Caco-2 (cell line): ENCODE measurements at regions of chr22 and their contacts with region 1.

Region 1: GRCh38 chr22:46934746-46935491 is 172.5 kb downstream of the TBC1D22A start:
- DNase-seq: peak; percentile 69 to 81
- H3K4me3 ChIP-seq: peak overlapping the region; percentile 17
- H3K4me3 Mint-ChIP-seq: peak overlapping the region; percentile 79
- H3K27ac Mint-ChIP-seq: peak overlapping the region; percentile 93
- H3K4me1 ChIP-seq: peaks cover 39% of the 10 kb centered on the region
- H3K4me1 Mint-ChIP-seq: peaks cover 22% of the 10 kb centered on the region
- H3K27me3 ChIP-seq: no peaks in the 10 kb centered on the region
- H3K27me3 Mint-ChIP-seq: no peaks in the 10 kb centered on the region
- CTCF ChIP-seq: no peak

Region 2: DNA sequence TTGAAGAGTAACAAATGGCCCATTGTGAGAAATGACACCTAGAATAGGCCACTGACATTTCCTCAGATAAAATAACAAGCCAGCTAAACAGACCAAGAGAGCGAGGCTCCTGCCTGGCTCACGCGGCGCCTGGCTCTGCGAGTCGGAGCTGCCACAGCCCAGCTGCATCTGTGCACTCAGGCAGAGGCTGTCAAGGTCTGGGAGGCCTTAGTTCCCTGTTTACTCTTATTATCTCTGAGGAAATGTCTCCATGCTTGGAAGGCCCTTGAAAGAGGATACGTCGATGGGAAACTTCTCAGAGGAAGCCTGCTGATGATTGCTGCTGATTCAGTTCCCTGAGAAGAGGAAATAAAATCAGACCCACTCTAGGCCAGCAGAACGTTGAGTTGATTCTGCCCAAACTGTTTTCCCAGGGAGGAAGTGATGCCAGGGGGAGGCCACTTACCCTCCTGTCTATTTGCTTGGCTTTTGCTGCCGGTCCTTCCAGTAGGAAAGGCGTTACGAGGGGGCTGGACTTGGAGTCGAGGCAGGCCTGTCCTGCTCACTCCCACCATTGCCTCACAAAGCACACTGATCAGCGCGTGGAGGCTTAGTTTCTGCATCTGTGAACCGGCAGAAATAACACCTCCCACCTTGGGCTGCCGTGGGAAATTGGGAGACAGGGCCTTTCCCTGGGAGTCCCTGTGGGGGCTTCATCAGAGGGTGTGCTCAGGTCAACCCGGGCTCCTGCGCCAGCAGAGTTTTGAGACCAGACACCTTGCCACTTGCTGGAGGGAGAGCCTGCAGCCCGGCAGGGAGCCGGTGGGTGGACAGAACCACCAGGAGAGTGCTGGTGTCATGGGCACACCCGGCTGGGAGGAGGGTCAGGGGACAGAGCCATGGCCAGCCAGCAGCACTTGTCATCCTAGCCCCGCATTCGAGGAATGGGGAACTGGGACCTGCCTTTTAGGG is 36.5 kb after region 1 on chr22:
- CTCF ChIA-PET with region 1: no interaction called
- POLR2A ChIA-PET with region 1: no interaction called
- intact Hi-C with region 1: no loop called
- DNase-seq: no peak
- H3K4me3 ChIP-seq: no peak overlapping the region
- H3K4me3 Mint-ChIP-seq: no peak overlapping the region
- H3K27ac Mint-ChIP-seq: no peak overlapping the region
- H3K4me1 ChIP-seq: no peaks in the 10 kb centered on the region
- H3K4me1 Mint-ChIP-seq: no peaks in the 10 kb centered on the region
- H3K27me3 ChIP-seq: no peaks in the 10 kb centered on the region
- H3K27me3 Mint-ChIP-seq: no peaks in the 10 kb centered on the region
- CTCF ChIP-seq: no peak

Region 3: GRCh38 chr22:46996595-46997310 is 61.8 kb after region 1 on chr22:
- CTCF ChIA-PET with region 1: no interaction called
- POLR2A ChIA-PET with region 1: no interaction called
- intact Hi-C with region 1: loop called (anchors 5 kb)
- DNase-seq: peak in 1 of 2 experiments; percentile 35
- H3K4me3 ChIP-seq: no peak overlapping the region
- H3K4me3 Mint-ChIP-seq: no peak overlapping the region
- H3K27ac Mint-ChIP-seq: peak overlapping the region; percentile 29
- H3K4me1 ChIP-seq: peaks cover 5% of the 10 kb centered on the region; the same call in 1 of the 2 replicates
- H3K4me1 Mint-ChIP-seq: peaks cover 7% of the 10 kb centered on the region
- H3K27me3 ChIP-seq: no peaks in the 10 kb centered on the region
- H3K27me3 Mint-ChIP-seq: no peaks in the 10 kb centered on the region
- CTCF ChIP-seq: peak in 1 of 2 experiments; percentile 41

Region 4: GRCh38 chr22:47102653-47103052 is 167.7 kb after region 1 on chr22:
- CTCF ChIA-PET with region 1: no interaction called
- POLR2A ChIA-PET with region 1: no interaction called
- intact Hi-C with region 1: loop called (anchors 1 kb)
- DNase-seq: peak; percentile 88 to 91
- H3K4me3 ChIP-seq: peak overlapping the region; percentile 27
- H3K4me3 Mint-ChIP-seq: peak overlapping the region; percentile 66
- H3K27ac Mint-ChIP-seq: peak overlapping the region; percentile 94
- H3K4me1 ChIP-seq: peaks cover 56% of the 10 kb centered on the region
- H3K4me1 Mint-ChIP-seq: peaks cover 42% of the 10 kb centered on the region
- H3K27me3 ChIP-seq: no peaks in the 10 kb centered on the region
- H3K27me3 Mint-ChIP-seq: no peaks in the 10 kb centered on the region
- CTCF ChIP-seq: no peak

Region 5: GRCh38 chr22:47151490-47151889 is 216.6 kb after region 1 on chr22:
- CTCF ChIA-PET with region 1: no interaction called
- POLR2A ChIA-PET with region 1: no interaction called
- intact Hi-C with region 1: no loop called
- DNase-seq: no peak
- H3K4me3 ChIP-seq: no peak overlapping the region
- H3K4me3 Mint-ChIP-seq: no peak overlapping the region
- H3K27ac Mint-ChIP-seq: no peak overlapping the region
- H3K4me1 ChIP-seq: no peaks in the 10 kb centered on the region
- H3K4me1 Mint-ChIP-seq: no peaks in the 10 kb centered on the region
- H3K27me3 ChIP-seq: no peaks in the 10 kb centered on the region
- H3K27me3 Mint-ChIP-seq: no peaks in the 10 kb centered on the region
- CTCF ChIP-seq: no peak